ENCODE measurements at regions of chr13 and their contacts with region 1.

Region 1: DNA sequence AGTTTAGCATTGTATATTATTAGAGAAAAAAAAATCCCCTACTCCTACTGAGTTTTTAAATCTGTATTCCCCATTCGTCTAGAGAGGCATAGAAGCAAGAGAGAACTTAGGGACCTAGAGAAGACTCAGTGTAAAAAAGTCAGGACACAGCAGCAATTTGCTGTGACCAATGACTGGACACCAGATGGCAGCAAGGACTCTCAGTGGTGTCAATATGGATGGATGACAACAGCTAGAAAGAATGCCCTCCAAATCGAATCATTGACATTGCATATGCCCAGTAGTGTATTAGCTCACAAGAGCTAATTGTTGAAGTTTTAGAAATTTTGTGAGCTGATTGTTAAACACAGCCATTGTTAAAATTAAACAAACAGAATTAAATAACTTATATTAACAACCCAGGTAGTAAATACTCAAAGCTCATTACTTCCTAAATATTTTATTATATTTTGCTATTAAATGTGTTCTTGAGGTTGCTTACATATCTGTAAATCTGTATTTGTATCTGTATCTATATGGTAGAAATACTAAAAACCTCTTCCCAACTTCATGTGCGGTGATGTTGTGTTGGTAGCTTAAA is 43.9 kb downstream of the SIAH3 start:
- DNase-seq: peak; percentile 67
- H3K4me3 Mint-ChIP-seq: no peak overlapping the region
- H3K27ac Mint-ChIP-seq: no peak overlapping the region
- H3K4me1 Mint-ChIP-seq: peaks cover 10% of the 10 kb centered on the region
- H3K27me3 Mint-ChIP-seq: no peaks in the 10 kb centered on the region
- CTCF ChIP-seq: peak; percentile 61

Region 2: GRCh38 chr13:45623515-45624090 is 184.0 kb before region 1 on chr13:
- CTCF ChIA-PET with region 1: interaction called, 27 read pairs
- POLR2A ChIA-PET with region 1: no interaction called
- intact Hi-C with region 1: loop called (anchors 1 kb)
- DNase-seq: peak; percentile 40
- H3K4me3 Mint-ChIP-seq: no peak overlapping the region
- H3K27ac Mint-ChIP-seq: no peak overlapping the region
- H3K4me1 Mint-ChIP-seq: peaks cover 10% of the 10 kb centered on the region
- H3K27me3 Mint-ChIP-seq: peaks cover 75% of the 10 kb centered on the region
- CTCF ChIP-seq: peak; percentile 64

Region 3: GRCh38 chr13:45826731-45827130 is 19.1 kb after region 1 on chr13:
- CTCF ChIA-PET with region 1: interaction called, 16 read pairs
- POLR2A ChIA-PET with region 1: no interaction called
- intact Hi-C with region 1: no loop called
- DNase-seq: no peak
- H3K4me3 Mint-ChIP-seq: no peak overlapping the region
- H3K27ac Mint-ChIP-seq: no peak overlapping the region
- H3K4me1 Mint-ChIP-seq: no peaks in the 10 kb centered on the region
- H3K27me3 Mint-ChIP-seq: no peaks in the 10 kb centered on the region
- CTCF ChIP-seq: no peak

Region 4: GRCh38 chr13:45925151-45925550 is 117.5 kb after region 1 on chr13:
- CTCF ChIA-PET with region 1: interaction called, 20 read pairs
- POLR2A ChIA-PET with region 1: no interaction called
- intact Hi-C with region 1: loop called (anchors 2 kb)
- DNase-seq: peak; percentile 13
- H3K4me3 Mint-ChIP-seq: no peak overlapping the region
- H3K27ac Mint-ChIP-seq: no peak overlapping the region
- H3K4me1 Mint-ChIP-seq: peaks cover 6% of the 10 kb centered on the region
- H3K27me3 Mint-ChIP-seq: peaks cover 50% of the 10 kb centered on the region
- CTCF ChIP-seq: no peak

Region 5: DNA sequence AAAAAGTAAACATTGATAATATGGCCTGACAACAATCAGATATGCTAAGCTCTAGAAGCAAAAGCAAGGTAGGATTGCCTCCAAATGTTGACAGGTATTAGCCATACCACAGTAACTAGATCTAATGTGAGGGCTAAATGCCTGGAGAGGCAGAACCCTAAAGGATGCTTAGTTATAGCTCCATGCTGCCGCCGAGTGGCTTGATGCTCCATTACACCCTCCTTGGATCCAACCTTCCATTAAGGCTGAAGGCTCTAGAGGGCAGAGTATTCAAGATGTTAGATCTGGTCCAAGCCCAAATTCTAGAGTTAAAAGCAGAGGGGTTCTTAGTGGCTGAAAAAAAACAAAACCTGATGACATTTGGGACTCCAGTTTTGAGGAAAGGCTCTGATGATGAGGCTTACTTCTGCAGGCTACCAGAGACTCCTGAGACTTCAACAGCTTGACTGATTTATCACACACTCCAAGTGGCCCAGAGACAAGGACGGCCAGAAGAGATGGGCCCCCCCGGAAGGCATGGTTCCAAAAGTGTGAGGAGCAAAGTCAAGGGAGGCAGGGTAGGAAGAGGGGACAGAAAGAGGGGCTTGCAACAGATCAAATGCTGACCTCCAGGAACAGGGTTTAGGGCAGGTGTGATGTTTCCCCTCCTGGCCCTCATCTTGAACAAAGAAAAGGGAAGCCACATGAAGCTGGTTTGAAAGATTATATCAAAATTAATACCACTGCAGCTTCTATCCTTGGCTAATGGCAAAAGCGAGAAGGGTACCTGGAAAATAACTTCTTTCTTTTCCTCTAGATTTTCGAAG is 319.1 kb after region 1 on chr13:
- CTCF ChIA-PET with region 1: interaction called, 17 read pairs
- POLR2A ChIA-PET with region 1: no interaction called
- intact Hi-C with region 1: loop called (anchors 1 kb)
- DNase-seq: peak; percentile 87
- H3K4me3 Mint-ChIP-seq: no peak overlapping the region
- H3K27ac Mint-ChIP-seq: no peak overlapping the region
- H3K4me1 Mint-ChIP-seq: peaks cover 6% of the 10 kb centered on the region
- H3K27me3 Mint-ChIP-seq: peaks cover 29% of the 10 kb centered on the region
- CTCF ChIP-seq: peak; percentile 88

Region 6: DNA sequence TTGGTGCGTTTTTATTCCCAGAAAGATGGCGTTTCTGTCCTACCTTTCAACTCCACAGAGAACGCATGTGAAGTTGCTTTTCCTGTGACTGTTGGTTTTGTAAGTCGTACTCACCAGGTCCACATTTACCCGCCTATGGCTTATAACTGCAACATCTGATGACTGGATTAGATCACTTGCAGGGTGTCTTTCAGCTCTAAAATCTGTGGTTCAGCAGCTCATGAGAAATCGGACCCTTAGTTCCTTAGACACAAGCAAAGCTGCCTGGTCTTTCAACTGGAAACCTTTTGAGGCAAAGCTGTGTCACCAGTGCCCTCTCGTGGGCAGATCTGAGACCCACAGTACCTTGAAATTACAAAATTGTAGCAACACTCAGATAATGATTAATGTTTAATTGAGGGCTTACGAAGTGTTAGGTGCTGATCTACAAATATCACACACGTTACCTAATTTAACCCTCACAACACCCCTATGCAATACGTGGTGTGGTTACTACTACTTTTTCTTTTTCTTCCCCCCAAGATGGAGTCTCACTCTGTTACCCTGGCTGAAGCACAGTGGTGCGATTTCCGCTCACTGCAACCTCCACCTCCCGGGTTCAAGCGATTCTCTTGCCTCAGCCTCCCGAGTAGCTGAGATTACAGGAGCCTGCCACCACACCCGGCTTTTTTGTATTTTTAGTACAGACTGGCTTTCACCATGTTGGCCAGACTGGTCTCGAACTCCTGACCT is 514.0 kb after region 1 on chr13:
- CTCF ChIA-PET with region 1: interaction called, 7 read pairs
- POLR2A ChIA-PET with region 1: no interaction called
- intact Hi-C with region 1: loop called (anchors 1 kb)
- DNase-seq: peak; percentile 68
- H3K4me3 Mint-ChIP-seq: no peak overlapping the region
- H3K27ac Mint-ChIP-seq: no peak overlapping the region
- H3K4me1 Mint-ChIP-seq: peaks cover 5% of the 10 kb centered on the region
- H3K27me3 Mint-ChIP-seq: no peaks in the 10 kb centered on the region
- CTCF ChIP-seq: peak; percentile 72